Activated CD4-positive, alpha-beta memory T cell treated with anti-CD3 and anti-CD28 coated beads for 36 hours (primary cell): ENCODE measurements at regions of chr6 and their contacts with region 1.

Region 1: GRCh38 chr6:85593438-85594196 is at the start of gene SNX14:
- DNase-seq: peak; percentile 90
- H3K4me3 Mint-ChIP-seq: peak within 1 kb of the TSS; percentile 84
- H3K27ac Mint-ChIP-seq: peak within 1 kb of the TSS; percentile 94
- H3K4me1 Mint-ChIP-seq: peaks cover 33% of the 10 kb centered on the region
- H3K27me3 Mint-ChIP-seq: no peaks in the 10 kb centered on the region
- total RNA-seq, gene SNX14: 50.9 to 59.6 TPM

Region 2: DNA sequence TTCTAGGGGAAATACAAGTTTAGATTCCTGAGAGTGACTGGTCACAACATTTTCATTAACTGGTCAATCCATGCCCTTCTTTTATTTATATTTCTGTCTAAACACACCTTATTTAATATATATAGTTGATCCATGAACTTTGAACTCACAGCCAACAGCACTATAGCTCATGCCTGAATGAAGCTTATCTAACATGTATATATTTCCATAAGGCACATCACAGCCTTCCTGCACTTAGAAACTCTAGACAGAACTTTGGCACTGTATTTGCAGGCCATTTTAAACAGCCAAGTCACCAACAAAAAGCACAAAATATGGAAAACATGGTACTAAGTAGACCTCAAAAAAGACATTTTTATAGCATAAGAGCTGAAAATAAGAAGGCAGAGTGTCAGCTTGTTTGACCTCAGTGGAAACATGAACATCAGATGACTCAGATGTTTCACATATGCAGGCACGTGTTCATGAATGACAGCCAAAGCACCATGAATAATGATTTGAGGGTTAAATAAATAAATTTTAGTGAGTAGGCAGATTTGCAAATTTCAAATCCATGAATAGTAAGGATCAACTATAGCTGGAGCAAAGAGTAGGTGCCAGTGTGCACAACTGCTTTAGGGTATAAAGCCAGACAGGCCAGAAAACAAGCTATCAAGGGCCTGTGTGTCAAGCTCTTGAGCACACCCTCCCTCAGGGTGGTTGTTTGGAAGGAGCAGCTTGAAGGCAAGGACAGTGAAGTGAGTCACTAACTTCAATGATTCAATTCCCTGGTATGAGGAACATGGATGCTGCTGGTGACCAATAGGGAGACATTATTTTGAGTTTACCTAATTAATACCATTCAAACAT is 232.6 kb before region 1 on chr6:
- CTCF ChIA-PET with region 1: no interaction called
- POLR2A ChIA-PET with region 1: no interaction called
- intact Hi-C with region 1: loop called (anchors 5 kb)
- DNase-seq: no peak
- H3K4me3 Mint-ChIP-seq: no peak overlapping the region
- H3K27ac Mint-ChIP-seq: no peak overlapping the region
- H3K4me1 Mint-ChIP-seq: peaks cover 5% of the 10 kb centered on the region
- H3K27me3 Mint-ChIP-seq: peaks cover 4% of the 10 kb centered on the region

Region 3: DNA sequence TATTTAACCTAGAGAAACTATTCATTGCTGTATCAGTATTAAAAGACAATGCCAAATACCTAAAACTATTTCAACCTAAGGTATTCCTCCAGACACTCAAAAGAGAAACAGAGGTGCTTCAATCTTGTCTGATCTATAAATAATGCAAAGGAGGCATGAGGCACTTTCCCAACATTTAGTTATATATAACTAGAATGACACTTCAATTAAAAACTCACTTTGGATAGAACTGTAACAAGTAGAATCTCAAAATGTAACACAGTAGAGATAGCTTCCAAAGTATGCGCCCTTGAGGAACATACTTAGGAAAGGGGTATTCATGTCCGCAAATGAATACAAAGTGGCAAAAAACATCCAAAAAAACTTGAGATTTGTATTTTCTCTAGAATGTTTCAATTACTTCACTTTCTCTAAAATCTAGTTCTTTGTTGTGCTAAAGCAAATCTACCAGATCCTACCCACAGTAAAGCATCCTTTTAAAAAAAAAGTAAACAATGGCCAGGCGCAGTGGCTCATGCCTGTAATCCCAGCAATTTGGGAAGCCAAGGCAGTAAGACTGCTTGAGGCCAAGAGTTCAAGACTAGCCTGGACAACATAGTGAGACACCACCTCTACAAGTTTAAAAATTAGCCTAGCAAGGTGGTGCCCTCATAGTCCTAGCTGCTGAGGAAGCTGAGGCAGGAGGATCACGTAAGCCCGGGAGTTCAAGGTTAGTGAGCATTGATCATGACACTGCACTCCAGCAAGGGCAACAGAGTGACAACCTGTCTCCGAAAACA is 38.7 kb after region 1 on chr6:
- CTCF ChIA-PET with region 1: no interaction called
- POLR2A ChIA-PET with region 1: no interaction called
- intact Hi-C with region 1: no loop called
- DNase-seq: no peak
- H3K4me3 Mint-ChIP-seq: no peak overlapping the region
- H3K27ac Mint-ChIP-seq: no peak overlapping the region
- H3K4me1 Mint-ChIP-seq: peaks cover 49% of the 10 kb centered on the region
- H3K27me3 Mint-ChIP-seq: no peaks in the 10 kb centered on the region

Region 4: DNA sequence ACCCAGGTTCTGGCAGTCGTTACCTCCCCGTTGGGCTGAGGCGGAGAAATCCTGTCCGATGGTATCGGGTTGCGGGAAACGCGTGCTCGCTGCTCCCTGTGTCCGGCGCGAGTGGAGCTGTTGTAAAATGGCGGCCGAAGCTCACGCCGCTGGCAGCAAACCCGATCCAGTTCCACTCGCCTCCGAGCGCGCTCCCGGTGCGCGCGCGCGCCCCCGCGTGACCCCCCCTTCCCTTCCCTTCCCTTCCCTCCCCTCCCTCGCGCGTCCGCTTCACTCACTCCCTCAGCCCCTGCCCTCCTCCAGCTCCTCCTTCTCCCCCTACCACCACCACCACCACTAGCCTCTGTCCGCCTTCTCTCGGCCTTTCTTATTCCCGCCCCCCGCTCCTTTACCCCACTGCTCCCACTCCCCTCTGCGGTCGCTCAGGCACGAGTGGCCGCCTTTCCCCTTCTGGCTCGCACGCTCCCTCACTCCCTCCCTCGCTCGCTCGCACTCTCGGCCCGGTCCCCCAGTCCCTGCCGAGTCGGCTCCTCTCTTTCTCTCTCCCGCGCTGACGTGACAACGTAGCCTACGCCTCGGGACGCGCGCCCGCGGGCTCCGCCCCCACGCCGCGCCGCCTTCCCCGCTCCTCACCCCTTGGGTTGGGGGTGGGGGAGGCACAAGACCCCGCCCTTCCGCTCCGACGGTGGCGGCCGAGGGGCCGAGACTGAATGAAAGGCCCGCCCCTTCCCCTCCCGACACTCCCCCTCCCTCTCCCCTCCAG is 49.3 kb after region 1 on chr6 and contains the start of gene SYNCRIP:
- CTCF ChIA-PET with region 1: interaction called, 5 read pairs
- POLR2A ChIA-PET with region 1: interaction called, 61 read pairs
- intact Hi-C with region 1: loop called (anchors 1 kb)
- DNase-seq: peak; percentile 98
- H3K4me3 Mint-ChIP-seq: peak within 1 kb of the TSS; percentile 86
- H3K27ac Mint-ChIP-seq: peak within 1 kb of the TSS; percentile 98
- H3K4me1 Mint-ChIP-seq: peaks cover 39% of the 10 kb centered on the region
- H3K27me3 Mint-ChIP-seq: no peaks in the 10 kb centered on the region
- total RNA-seq, gene SYNCRIP: 138 to 139 TPM

Region 5: DNA sequence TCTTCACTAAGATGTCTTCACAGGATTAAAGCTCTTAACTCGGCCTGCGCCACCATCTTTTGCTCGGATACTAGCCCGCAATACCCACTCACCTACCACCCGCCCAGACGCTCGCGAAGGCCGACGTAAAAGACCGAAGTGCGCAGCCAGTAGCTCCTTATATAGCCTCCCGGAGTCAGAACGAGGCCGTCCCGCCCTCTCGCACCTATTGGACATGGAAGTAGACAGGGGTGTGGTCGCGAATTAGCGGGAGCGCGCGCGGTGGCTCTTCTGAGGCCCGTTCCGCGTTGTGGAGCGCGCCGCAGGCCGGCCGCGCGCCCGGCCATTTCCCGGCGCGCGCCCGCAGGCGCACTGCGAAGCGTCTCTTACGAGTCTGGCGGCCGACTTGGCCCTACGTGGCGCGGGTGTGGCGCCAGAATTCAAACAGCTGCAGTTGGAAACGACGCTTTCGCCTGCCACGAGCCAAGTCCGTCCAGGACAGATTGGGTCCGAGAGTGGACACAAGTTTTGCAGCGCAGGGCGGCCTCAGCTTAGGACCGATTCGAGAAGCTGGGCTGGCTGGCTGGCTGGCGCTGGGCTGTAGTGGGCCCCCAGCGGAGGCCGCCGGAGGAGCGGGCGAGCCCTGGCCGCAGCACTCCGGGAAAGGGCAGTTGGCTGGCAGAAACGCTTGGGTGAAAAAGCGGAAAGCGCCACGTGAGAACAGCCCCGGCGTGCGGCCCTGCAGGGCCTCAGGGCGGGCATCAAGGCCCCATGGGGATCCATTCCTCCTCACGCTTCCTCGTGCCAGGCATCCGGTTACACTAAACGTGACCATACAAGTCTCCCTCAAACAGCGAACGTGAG is 85.2 kb after region 1 on chr6:
- CTCF ChIA-PET with region 1: interaction called, 3 read pairs
- POLR2A ChIA-PET with region 1: interaction called, 53 read pairs
- intact Hi-C with region 1: loop called (anchors 1 kb)
- DNase-seq: peak; percentile 98
- H3K4me3 Mint-ChIP-seq: peak overlapping the region; percentile 95
- H3K27ac Mint-ChIP-seq: peak overlapping the region; percentile 90
- H3K4me1 Mint-ChIP-seq: peaks cover 34% of the 10 kb centered on the region
- H3K27me3 Mint-ChIP-seq: no peaks in the 10 kb centered on the region

Region 6: GRCh38 chr6:85810558-85810957 is 216.9 kb after region 1 on chr6:
- CTCF ChIA-PET with region 1: no interaction called
- POLR2A ChIA-PET with region 1: no interaction called
- intact Hi-C with region 1: no loop called
- DNase-seq: no peak
- H3K4me3 Mint-ChIP-seq: no peak overlapping the region
- H3K27ac Mint-ChIP-seq: no peak overlapping the region
- H3K4me1 Mint-ChIP-seq: no peaks in the 10 kb centered on the region
- H3K27me3 Mint-ChIP-seq: peaks cover 6% of the 10 kb centered on the region